ENCODE measurements at regions of chr13 and their contacts with region 1.

Region 1: DNA sequence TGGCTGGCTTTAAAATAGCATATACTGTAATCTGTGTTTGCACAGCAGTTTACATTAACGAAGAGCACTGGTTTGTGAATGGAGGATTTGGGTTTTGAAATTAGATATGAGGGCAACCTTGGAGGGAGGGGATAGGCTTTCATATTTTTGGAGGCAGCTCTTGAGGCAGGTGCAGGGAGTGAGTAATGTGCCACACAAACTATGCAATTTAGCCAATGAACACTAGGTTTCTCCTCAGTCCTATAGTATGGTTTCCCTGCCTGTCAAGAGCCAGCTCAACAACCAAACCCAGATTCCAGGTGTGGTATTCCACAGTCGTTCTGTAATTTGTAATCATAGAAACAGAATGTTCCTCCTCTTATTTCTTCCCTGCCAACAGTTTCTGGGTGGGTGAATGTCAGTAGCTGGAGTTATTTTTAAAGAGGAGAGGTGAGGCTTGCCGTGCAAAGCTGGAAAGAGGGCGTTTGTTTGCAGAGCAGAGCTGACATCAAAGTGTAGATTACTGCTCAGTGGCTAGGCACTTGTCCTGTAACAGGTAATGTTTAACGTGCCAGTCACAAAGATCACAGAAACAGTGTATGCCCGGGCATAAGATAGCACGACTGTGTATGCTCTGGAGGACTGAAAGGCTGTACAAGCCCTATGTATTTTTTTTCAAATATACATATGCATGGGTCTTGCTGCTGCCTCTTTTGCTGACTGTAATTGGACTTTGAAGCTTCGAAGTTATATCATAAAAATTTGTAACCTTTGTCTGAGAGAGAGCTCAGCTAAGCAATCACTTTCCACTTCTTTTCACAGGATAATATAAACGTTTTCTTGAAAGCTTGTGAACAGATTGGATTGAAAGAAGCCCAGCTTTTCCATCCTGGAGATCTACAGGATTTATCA is 124.2 kb downstream of the LMO7 start:
- DNase-seq: peak; percentile 70
- H3K4me3 Mint-ChIP-seq: peak overlapping the region; percentile 81
- H3K27ac Mint-ChIP-seq: no peak overlapping the region
- H3K4me1 Mint-ChIP-seq: peaks cover 40% of the 10 kb centered on the region
- H3K27me3 Mint-ChIP-seq: no peaks in the 10 kb centered on the region

Region 2: DNA sequence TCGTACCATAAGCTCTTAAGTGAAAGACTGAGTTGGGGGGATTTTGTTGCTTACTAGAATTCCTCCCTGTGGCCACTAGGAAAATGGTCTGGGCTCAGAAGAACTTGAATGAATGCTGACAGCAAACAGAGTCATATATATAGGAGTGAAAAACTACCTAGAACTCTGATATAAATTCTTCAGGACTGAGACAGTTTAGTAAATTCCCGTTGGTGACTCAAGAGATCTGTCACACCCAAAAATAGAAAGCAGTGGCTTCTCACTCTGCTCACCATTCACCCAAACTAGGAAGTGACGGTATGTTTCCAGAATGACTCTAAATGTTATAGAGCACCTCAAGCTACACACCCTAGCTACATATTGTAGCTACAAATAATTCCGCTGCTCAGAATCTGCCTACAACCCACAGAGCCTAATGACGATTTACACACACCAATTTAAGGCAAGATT is 394.6 kb before region 1 on chr13:
- intact Hi-C with region 1: loop called (anchors 5 kb)
- DNase-seq: peak; percentile 81
- H3K4me3 Mint-ChIP-seq: peak overlapping the region; percentile 68
- H3K27ac Mint-ChIP-seq: peak overlapping the region; percentile 93
- H3K4me1 Mint-ChIP-seq: peaks cover 48% of the 10 kb centered on the region
- H3K27me3 Mint-ChIP-seq: no peaks in the 10 kb centered on the region

Region 3: GRCh38 chr13:75549262-75550158 is 210.9 kb before region 1 on chr13 and contains the start of gene UCHL3:
- intact Hi-C with region 1: loop called (anchors 10 kb)
- DNase-seq: peak; percentile 99
- H3K4me3 Mint-ChIP-seq: peak within 1 kb of the TSS; percentile 89
- H3K27ac Mint-ChIP-seq: peak within 1 kb of the TSS; percentile 97
- H3K4me1 Mint-ChIP-seq: peaks cover 25% of the 10 kb centered on the region
- H3K27me3 Mint-ChIP-seq: peaks cover 2% of the 10 kb centered on the region
- total RNA-seq, gene UCHL3: 43.5 and 50.6 TPM in 2 replicates

Region 4: DNA sequence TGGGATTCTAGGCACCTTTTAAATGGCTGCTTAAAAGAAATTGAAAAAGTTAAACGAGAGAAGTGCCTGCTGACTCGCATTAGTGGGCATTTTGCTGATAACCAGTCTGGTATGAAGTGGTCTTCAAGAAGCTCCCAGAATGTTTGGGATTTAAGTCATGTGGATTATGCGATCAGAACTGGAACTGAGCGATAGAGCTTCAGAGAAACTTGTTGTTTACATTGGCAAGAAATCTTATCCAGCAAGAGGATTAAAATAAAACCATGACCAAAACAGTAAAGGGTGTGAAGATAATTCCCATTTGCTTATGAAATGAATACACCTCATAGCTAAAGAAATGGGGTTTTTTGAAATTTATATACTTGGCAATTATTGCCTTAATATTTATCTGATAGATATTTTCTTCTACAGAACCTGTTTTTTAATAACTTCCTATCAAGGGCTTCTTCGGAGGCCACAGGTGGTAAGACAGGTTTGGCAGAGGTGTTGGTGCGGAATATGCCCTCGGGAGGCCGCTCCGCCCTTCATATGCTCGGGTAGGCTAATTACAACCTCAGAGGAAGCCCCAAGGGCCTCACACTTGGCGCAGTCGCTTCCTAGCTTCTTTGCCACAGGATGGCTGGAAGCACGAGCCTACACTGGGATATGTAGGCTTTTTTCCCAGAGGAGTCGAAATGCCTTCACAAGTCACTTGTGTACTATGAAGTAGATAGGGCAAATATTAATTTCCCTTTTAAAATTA is 55.6 kb before region 1 on chr13:
- intact Hi-C with region 1: loop called (anchors 5 kb)
- DNase-seq: no peak
- H3K4me3 Mint-ChIP-seq: no peak overlapping the region
- H3K27ac Mint-ChIP-seq: no peak overlapping the region
- H3K4me1 Mint-ChIP-seq: peaks cover 3% of the 10 kb centered on the region
- H3K27me3 Mint-ChIP-seq: no peaks in the 10 kb centered on the region

Region 5: GRCh38 chr13:75803164-75803611 is 42.8 kb after region 1 on chr13:
- intact Hi-C with region 1: loop called (anchors 1 kb)
- DNase-seq: peak; percentile 71
- H3K4me3 Mint-ChIP-seq: peak overlapping the region; percentile 6
- H3K27ac Mint-ChIP-seq: peak overlapping the region; percentile 13
- H3K4me1 Mint-ChIP-seq: peaks cover 30% of the 10 kb centered on the region
- H3K27me3 Mint-ChIP-seq: no peaks in the 10 kb centered on the region

Region 6: DNA sequence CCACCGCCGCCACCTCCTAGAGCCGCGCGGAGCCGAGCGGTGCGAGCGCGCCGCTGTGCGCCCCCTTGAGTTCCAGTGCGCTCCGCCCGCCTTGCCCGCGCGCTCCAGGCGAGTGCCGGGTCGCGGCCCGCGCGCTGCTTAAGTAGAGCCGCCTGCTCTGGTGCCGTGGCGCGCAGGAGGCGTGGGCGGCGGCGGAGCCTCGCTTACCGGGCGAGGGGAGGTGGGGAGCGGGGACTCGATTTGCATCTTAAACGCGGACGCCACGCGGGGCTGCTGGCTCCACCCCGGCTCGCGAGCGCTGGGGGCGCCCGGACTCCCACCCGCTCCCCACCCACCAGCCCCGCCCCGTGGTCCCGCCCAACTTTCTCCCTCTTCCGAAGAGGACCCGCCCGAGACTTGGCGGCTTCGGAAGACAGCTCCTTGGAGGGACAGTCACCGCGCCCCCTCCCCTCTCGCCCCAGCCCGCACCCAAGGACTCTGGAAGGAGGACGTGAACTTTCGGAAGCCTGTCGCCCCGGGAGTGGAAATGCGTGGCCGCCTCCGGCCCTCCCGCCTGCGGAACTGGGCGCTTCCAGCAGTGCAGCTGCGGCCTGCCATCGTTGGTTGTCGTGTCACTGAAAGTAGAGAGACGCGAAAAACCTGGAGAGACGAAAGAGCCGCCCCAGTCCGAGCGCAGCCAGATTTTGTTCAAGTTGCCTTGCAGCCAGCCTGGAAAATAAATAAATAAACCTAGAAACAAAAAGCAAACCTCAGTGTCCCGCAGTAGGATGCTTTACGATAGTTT is 1126.1 kb after region 1 on chr13 and contains the start of gene KCTD12:
- intact Hi-C with region 1: loop called (anchors 5 kb)
- DNase-seq: peak; percentile 93
- H3K4me3 Mint-ChIP-seq: peak within 1 kb of the TSS; percentile 89
- H3K27ac Mint-ChIP-seq: peak within 1 kb of the TSS; percentile 87
- H3K4me1 Mint-ChIP-seq: peaks cover 26% of the 10 kb centered on the region
- H3K27me3 Mint-ChIP-seq: peaks cover 40% of the 10 kb centered on the region
- total RNA-seq, gene KCTD12: 11.8 and 12.9 TPM in 2 replicates